Stomach (tissue), 19 donors: ENCODE measurements at regions of chr15 and their contacts with region 1.

Region 1: GRCh38 chr15:44606740-44607139 is 56.7 kb downstream of the SPG11 start:
- DNase-seq: no peak
- H3K4me3 ChIP-seq: no peak overlapping the region
- H3K27ac ChIP-seq: no peak overlapping the region
- H3K4me1 ChIP-seq: no peaks in the 10 kb centered on the region
- H3K27me3 ChIP-seq: no peaks in the 10 kb centered on the region
- CTCF ChIP-seq: no peak
- EP300 ChIP-seq: no peak
- POLR2A ChIP-seq: no peak

Region 2: GRCh38 chr15:44092221-44092620 is 514.5 kb before region 1 on chr15:
- intact Hi-C with region 1: no loop called
- DNase-seq: peak in 1 of 2 donors; percentile 10
- H3K4me3 ChIP-seq: no peak overlapping the region
- H3K27ac ChIP-seq: no peak overlapping the region
- H3K4me1 ChIP-seq: no peaks in the 10 kb centered on the region
- H3K27me3 ChIP-seq: no peaks in the 10 kb centered on the region
- CTCF ChIP-seq: no peak
- EP300 ChIP-seq: no peak
- POLR2A ChIP-seq: no peak

Region 3: DNA sequence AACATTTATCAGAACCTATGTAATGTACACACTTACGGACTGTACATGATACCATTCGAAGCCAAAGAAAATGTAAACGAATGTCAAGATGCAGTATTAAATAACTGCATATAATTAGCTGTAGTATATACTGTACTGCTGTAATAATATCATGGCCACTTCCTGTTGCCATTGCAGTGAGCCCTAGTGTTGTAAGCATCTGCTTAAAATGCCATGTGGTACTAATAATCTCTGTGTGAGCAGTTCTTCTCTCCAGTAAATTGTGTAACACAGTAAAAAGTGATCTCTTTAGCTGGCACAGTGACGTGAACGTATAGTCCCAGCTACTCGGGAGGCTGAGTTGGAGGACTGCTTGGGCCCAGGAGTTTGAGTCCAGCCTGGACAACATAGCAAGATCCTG is 48.1 kb after region 1 on chr15:
- intact Hi-C with region 1: loop called (anchors 10 kb)
- DNase-seq: no peak
- H3K4me3 ChIP-seq: no peak overlapping the region
- H3K27ac ChIP-seq: no peak overlapping the region
- H3K4me1 ChIP-seq: no peaks in the 10 kb centered on the region
- H3K27me3 ChIP-seq: no peaks in the 10 kb centered on the region
- CTCF ChIP-seq: no peak
- EP300 ChIP-seq: no peak
- POLR2A ChIP-seq: no peak